T-cell (primary cell): ENCODE measurements at regions of chr2 and their contacts with region 1.

Region 1: DNA sequence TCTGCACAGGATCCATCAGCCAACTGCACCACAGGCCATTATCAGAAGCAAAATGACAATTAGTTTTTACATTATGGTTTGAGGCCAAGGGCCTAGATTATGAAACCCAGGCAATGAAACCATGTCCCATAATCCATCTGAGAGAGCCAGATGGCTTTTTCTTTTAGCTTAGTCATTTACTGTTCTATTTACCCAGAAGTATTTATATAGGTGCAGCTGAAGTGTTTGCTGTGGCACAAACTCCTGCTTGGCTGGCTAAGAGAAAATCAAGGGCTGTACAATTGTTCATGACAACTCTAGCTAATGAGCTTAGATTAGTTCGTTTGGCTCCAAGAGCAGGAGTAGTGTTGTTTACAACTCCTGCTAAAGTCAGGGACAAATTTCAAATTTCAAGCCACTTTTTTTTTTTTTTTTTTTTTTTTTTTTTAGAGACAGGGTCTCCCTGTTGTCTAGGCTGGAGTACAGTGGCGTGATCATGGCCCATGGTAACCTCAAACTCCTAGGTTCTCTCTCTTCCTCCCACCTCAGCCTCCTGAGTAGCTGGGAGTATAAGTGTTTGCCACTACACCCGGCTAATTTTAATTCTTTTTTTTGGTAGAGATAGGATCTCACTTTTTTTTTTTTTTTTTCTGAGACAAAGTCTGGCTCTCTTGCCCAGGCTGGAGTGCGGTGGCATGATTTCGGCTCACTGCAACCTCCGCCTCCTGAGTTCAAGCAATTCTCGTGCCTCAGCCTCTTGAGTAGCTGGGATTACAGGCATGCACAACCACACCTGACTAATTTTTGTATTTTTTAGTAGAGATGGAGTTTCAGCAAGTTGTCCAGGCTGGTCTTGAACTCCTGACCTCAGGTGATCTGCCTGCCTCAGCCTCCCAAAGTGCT is 18.4 kb upstream of the REV1 start:
- DNase-seq: no peak
- ATAC-seq: no peak
- H3K4me3 ChIP-seq: no peak overlapping the region
- H3K4me3 Mint-ChIP-seq: no peak overlapping the region
- H3K27ac ChIP-seq: no peak overlapping the region
- H3K27ac Mint-ChIP-seq: no peak overlapping the region
- H3K4me1 ChIP-seq: no peaks in the 10 kb centered on the region
- H3K4me1 Mint-ChIP-seq: peaks cover 0 to 14% (median 11%) of the 10 kb centered on the region in 3 donors
- H3K27me3 ChIP-seq: no peaks in the 10 kb centered on the region
- H3K27me3 Mint-ChIP-seq: no peaks in the 10 kb centered on the region

Region 2: DNA sequence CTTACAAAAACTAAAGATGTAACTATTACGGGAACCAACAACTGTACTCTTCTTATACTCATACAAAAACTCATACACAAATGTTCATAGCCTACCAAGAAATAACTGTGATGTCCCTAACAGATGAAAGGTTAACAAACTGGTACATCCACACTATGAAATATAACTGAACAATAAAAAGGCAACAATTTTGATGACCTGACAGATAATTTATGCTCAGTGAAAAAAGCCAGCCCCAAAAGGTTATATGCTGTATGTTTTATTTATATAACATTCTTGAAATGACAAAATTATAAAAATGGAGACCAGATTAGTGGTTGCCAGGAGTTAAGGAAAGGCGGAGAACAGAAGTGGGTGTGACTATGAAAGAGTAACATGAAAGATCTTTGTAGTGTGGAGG is 49.6 kb before region 1 on chr2:
- CTCF ChIA-PET with region 1: interaction called in 1 of 2 experiments, 10 read pairs
- POLR2A ChIA-PET with region 1: no interaction called
- DNase-seq: no peak
- ATAC-seq: no peak
- H3K4me3 ChIP-seq: no peak overlapping the region
- H3K4me3 Mint-ChIP-seq: no peak overlapping the region
- H3K27ac ChIP-seq: no peak overlapping the region
- H3K27ac Mint-ChIP-seq: no peak overlapping the region
- H3K4me1 ChIP-seq: no peaks in the 10 kb centered on the region
- H3K4me1 Mint-ChIP-seq: peaks cover 5 to 11% (median 7%) of the 10 kb centered on the region in 3 donors
- H3K27me3 ChIP-seq: no peaks in the 10 kb centered on the region
- H3K27me3 Mint-ChIP-seq: no peaks in the 10 kb centered on the region